HEK293 (cell line): ENCODE measurements at regions of chr14 and their contacts with region 1.

Region 1: DNA sequence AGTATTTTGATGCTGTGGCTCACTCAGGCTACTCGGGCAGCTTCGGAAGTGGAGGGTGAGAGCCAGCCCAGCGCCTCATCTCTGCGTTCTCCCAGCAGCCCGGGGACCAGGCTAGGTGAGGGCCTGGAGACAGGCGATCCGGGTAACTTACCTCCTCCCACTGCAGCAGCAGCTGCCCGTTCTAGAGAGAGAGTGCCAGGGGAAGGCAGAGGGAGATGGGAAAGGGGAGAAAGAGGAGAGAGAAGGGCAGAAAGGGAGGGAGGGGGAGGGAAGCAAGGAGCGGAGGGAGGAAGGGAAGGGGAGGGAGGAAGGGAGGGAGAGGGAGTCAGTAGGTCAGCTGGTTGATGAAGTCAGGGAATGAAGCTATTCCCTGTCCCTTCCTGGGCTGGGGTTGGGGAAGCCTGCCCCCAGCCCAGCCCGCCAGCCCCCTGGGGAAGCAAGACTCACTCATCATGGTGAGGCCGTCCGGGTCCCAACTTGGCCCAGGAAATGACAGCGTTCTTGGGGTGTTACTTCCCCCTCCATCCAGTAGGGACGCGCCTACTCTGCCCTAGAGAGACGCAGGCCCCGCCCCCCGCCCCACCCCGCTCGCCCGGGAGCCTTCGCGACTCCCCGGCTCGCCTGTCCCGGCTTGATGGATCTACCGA is at the start of gene IFI27L2:
- H3K4me3 ChIP-seq: peak within 1 kb of the TSS; percentile 48
- H3K27ac ChIP-seq: peak within 1 kb of the TSS; percentile 37; the same call in 1 of the 2 replicates
- H3K4me1 ChIP-seq: peaks cover 3% of the 10 kb centered on the region; the same call in 1 of the 2 replicates
- CTCF ChIP-seq: 0 out of 2 replicates have a peak, but pooled peaks have one; percentile 31

Region 2: DNA sequence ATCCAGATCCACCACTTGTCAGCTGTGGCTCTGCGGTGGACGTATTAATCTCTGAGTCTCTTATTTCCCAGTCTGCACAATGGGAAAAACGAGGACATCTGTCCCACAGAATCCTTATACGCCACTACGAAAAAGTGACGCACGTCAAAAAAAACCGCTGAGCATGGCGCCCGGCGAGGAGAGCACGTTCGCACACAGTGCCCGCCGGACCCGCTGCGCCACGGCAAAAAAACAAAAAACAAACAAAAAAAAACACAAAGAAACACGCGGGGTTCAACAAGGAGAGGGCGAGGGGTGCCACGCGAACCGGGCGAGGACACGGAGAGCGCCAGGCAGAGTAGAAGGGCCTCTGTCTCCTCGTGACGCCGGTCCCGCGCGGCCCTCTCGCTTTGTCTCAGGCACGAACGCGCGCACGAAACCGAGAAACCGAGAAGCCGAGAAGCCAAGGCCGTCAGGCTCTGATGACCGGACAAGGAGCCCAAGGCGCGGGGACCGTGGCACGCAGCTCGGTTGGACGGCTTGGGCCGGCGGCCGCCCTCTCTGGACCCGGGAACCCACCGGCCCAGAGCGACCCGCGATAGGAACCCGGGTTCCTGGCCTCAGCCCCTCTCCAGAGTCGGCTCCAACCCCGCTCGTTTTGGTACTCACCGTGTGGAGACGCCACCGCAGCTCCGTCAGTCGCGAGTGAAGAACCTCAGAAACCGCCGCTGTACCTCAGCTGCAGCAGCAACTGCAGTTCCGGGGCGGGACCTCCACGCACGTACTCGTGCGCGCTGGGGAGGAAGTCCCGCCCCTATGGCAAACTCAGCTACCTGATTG is 48.6 kb before region 1 on chr14 and contains the start of gene DDX24:
- CTCF ChIA-PET with region 1: interaction called, 5 read pairs
- POLR2A ChIA-PET with region 1: interaction called, 10 read pairs
- H3K4me3 ChIP-seq: peak within 1 kb of the TSS; percentile 91
- H3K27ac ChIP-seq: peak within 1 kb of the TSS; percentile 82; the same call in 1 of the 2 replicates
- H3K4me1 ChIP-seq: peaks cover 4% of the 10 kb centered on the region; the same call in 1 of the 2 replicates
- CTCF ChIP-seq: no peak; the same call in 1 of the 2 replicates

Region 3: DNA sequence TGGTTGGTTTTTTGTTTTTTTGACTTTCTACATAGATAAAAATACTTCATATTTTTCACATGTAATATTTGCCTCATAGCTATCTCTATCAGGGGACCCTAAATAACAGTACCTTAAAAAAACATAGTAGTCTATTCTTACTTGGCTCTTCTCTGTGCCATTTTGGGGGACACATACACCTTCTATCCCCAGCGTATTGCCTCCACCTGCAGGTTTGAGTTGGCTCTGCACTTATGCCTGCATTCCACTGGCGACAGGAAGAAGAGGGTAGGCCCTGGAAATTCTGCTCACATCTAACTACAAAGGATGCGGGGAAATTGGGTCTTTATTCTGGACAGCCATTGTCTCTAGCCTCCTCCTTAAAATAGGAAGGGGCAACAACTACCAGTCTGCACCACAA is 14.0 kb after region 1 on chr14:
- CTCF ChIA-PET with region 1: interaction called, 10 read pairs
- POLR2A ChIA-PET with region 1: no interaction called
- H3K4me3 ChIP-seq: no peak overlapping the region
- H3K27ac ChIP-seq: no peak overlapping the region
- H3K4me1 ChIP-seq: peaks cover 2% of the 10 kb centered on the region; the same call in 1 of the 2 replicates
- CTCF ChIP-seq: no peak

Region 4: GRCh38 chr14:94180655-94181271 is 51.5 kb after region 1 on chr14:
- CTCF ChIA-PET with region 1: interaction called, 16 read pairs
- POLR2A ChIA-PET with region 1: no interaction called
- H3K4me3 ChIP-seq: no peak overlapping the region
- H3K27ac ChIP-seq: no peak overlapping the region
- H3K4me1 ChIP-seq: no peaks in the 10 kb centered on the region
- CTCF ChIP-seq: peak; percentile 48; the same call in 1 of the 2 replicates

Region 5: GRCh38 chr14:94203473-94204210 is 74.4 kb after region 1 on chr14:
- CTCF ChIA-PET with region 1: no interaction called
- POLR2A ChIA-PET with region 1: no interaction called
- H3K4me3 ChIP-seq: no peak overlapping the region
- H3K27ac ChIP-seq: no peak overlapping the region
- H3K4me1 ChIP-seq: no peaks in the 10 kb centered on the region
- CTCF ChIP-seq: no peak

Region 6: GRCh38 chr14:94307410-94307992 is 178.3 kb after region 1 on chr14:
- CTCF ChIA-PET with region 1: no interaction called
- POLR2A ChIA-PET with region 1: no interaction called
- H3K4me3 ChIP-seq: no peak overlapping the region
- H3K27ac ChIP-seq: no peak overlapping the region
- H3K4me1 ChIP-seq: no peaks in the 10 kb centered on the region
- CTCF ChIP-seq: no peak